Activated CD8-positive, alpha-beta T cell treated with anti-CD3 and anti-CD28 coated beads for 36 hours (primary cell): ENCODE measurements at regions of chr1 and their contacts with region 1.

Region 1: GRCh38 chr1:206461602-206462455 is 8.4 kb upstream of the IKBKE start:
- DNase-seq: peak; percentile 91
- ATAC-seq: peak; percentile 79
- H3K4me3 Mint-ChIP-seq: no peak overlapping the region
- H3K27ac Mint-ChIP-seq: no peak overlapping the region
- H3K4me1 Mint-ChIP-seq: peaks cover 40% of the 10 kb centered on the region
- H3K27me3 Mint-ChIP-seq: no peaks in the 10 kb centered on the region
- CTCF ChIP-seq: peak; percentile 89

Region 2: GRCh38 chr1:205832326-205832751 is 629.5 kb before region 1 on chr1:
- CTCF ChIA-PET with region 1: no interaction called
- POLR2A ChIA-PET with region 1: no interaction called
- intact Hi-C with region 1: no loop called
- DNase-seq: no peak
- ATAC-seq: no peak
- H3K4me3 Mint-ChIP-seq: no peak overlapping the region
- H3K27ac Mint-ChIP-seq: no peak overlapping the region
- H3K4me1 Mint-ChIP-seq: no peaks in the 10 kb centered on the region
- H3K27me3 Mint-ChIP-seq: no peaks in the 10 kb centered on the region
- CTCF ChIP-seq: no peak

Region 3: DNA sequence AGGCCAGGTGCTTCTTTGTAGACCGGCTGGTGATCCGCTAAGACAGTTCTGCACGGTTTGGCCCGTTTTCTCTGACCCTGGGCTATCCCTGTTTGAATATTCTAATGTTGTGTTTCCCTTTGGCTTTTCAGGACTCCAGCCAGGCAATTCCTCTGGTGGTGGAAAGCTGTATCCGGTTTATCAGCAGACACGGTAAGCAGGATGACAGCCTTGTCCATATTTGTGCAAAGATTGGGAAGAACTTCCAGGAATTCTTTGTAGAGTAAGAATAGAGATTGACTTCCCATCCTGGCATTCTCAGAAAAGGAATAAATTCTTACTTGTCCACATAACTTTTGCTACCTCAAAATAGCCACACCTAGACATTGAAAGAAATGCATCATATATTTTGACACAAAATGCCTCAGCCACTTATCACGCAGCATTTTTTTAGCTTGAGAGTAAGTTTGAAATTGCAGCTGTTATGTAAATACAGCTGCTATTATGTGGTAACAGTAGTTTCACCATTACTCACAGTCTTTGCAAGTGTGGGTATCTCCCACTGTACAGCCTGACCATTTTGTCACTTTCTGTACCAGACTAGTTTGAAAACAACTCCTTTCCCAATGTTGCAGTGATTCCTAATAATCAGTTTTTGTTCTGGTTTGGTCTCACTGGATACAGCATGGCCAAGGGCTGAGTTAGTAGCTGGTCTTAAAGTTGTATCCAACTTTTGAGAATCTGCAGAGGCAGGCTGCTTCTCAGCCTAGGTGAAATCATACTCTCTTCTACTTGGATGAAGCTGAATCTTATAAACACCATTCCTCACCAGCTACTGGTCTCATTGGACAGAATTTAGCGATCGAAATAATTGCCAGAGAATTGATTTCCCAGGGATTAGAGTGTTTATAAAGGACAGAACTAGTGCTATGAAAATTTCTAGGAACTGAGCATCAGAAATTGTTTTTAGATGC is 31.5 kb before region 1 on chr1:
- CTCF ChIA-PET with region 1: interaction called, 12 read pairs
- POLR2A ChIA-PET with region 1: no interaction called
- intact Hi-C with region 1: no loop called
- DNase-seq: no peak
- ATAC-seq: peak; percentile 61
- H3K4me3 Mint-ChIP-seq: no peak overlapping the region
- H3K27ac Mint-ChIP-seq: no peak overlapping the region
- H3K4me1 Mint-ChIP-seq: no peaks in the 10 kb centered on the region
- H3K27me3 Mint-ChIP-seq: no peaks in the 10 kb centered on the region
- CTCF ChIP-seq: no peak

Region 4: GRCh38 chr1:206445116-206445515 is 16.7 kb before region 1 on chr1:
- CTCF ChIA-PET with region 1: interaction called, 26 read pairs
- POLR2A ChIA-PET with region 1: interaction called, 3 read pairs
- intact Hi-C with region 1: no loop called
- DNase-seq: no peak
- ATAC-seq: no peak
- H3K4me3 Mint-ChIP-seq: no peak overlapping the region
- H3K27ac Mint-ChIP-seq: no peak overlapping the region
- H3K4me1 Mint-ChIP-seq: no peaks in the 10 kb centered on the region
- H3K27me3 Mint-ChIP-seq: no peaks in the 10 kb centered on the region
- CTCF ChIP-seq: no peak